AG04449 (cell line): ENCODE measurements at regions of chr3 and their contacts with region 1.

Region 1: GRCh38 chr3:151838583-151839312 is 24.8 kb downstream of the AADAC start:
- DNase-seq: no peak
- H3K4me3 ChIP-seq: no peak overlapping the region
- CTCF ChIP-seq: peak; percentile 61

Region 2: GRCh38 chr3:151227807-151228665 is 610.7 kb before region 1 on chr3:
- CTCF ChIA-PET with region 1: interaction called, 11 read pairs
- POLR2A ChIA-PET with region 1: no interaction called
- DNase-seq: no peak
- H3K4me3 ChIP-seq: no peak overlapping the region
- CTCF ChIP-seq: peak; percentile 83

Region 3: DNA sequence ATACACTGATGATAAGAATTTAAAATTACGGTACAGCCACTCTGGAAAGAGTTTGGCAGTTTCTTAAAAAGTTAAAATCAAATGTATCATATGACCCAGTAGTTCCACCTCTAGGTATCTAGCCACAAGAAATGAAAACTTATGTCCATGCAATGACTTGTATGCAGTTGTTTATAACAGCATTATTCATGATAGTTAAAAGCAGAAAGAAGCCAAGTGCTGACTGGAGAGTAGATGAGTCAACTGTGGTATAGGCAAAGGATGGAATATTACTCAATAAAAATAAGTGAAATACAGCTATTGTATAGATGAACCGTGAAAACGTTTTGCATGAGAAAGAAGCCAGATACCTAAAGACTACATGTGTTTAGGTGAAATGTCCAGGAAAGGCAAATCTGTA is 537.0 kb before region 1 on chr3:
- CTCF ChIA-PET with region 1: interaction called, 11 read pairs
- POLR2A ChIA-PET with region 1: no interaction called
- DNase-seq: no peak
- H3K4me3 ChIP-seq: no peak overlapping the region
- CTCF ChIP-seq: no peak

Region 4: GRCh38 chr3:151434151-151434890 is 404.4 kb before region 1 on chr3:
- CTCF ChIA-PET with region 1: interaction called, 121 read pairs
- POLR2A ChIA-PET with region 1: no interaction called
- DNase-seq: peak; percentile 65
- H3K4me3 ChIP-seq: no peak overlapping the region
- CTCF ChIP-seq: no peak

Region 5: GRCh38 chr3:151445273-151446001 is 393.3 kb before region 1 on chr3:
- CTCF ChIA-PET with region 1: interaction called, 121 read pairs
- POLR2A ChIA-PET with region 1: no interaction called
- DNase-seq: peak; percentile 76
- H3K4me3 ChIP-seq: no peak overlapping the region
- CTCF ChIP-seq: no peak

Region 6: DNA sequence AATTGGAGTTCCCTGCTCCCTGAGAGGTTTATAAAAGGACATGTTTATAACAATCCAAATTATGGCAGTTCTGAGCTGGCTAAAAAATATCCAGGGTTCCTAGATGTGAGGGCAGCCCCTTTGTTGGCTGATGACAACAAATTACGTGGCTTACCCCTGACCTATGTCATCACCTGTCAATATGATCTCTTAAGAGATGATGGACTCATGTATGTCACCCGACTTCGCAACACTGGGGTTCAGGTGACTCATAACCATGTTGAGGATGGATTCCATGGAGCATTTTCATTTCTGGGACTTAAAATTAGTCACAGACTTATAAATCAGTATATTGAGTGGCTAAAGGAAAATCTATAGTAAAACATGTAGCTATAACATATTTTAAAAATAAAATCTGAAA is 10.9 kb before region 1 on chr3:
- CTCF ChIA-PET with region 1: interaction called, 10 read pairs
- POLR2A ChIA-PET with region 1: no interaction called
- DNase-seq: no peak
- H3K4me3 ChIP-seq: no peak overlapping the region
- CTCF ChIP-seq: no peak

Region 7: DNA sequence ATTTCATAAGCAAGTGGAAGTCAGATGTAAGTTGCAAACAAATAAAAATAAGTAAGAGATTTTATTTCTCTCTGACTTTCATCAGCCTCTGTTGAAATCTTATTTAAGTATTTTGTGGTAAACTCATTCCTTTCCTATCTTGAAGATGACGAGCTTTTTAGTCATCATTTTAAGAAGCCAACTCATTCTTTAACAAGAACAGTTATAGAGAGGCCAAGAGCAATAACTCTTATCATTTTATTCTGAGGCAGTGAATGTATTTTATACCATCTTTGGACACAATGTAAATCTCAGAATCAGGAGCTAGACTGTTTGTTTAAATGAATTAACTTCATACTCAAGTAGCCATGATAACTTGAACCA is 282.5 kb after region 1 on chr3:
- CTCF ChIA-PET with region 1: no interaction called
- POLR2A ChIA-PET with region 1: no interaction called
- DNase-seq: peak; percentile 86
- H3K4me3 ChIP-seq: no peak overlapping the region
- CTCF ChIP-seq: no peak